T-cell (primary cell): ENCODE measurements at regions of chr19 and their contacts with region 1.

Region 1: GRCh38 chr19:41144403-41144802 is 30.2 kb downstream of the CYP2F1 start:
- DNase-seq: peak; percentile 70 to 95 (median 84)
- ATAC-seq: peak; percentile 80 to 99 (median 94)
- H3K4me3 ChIP-seq: no peak overlapping the region
- H3K4me3 Mint-ChIP-seq: no peak overlapping the region
- H3K27ac ChIP-seq: no peak overlapping the region
- H3K27ac Mint-ChIP-seq: no peak overlapping the region
- H3K4me1 ChIP-seq: no peaks in the 10 kb centered on the region
- H3K4me1 Mint-ChIP-seq: peaks cover 0 to 2% (median 2%) of the 10 kb centered on the region in 3 donors
- H3K27me3 ChIP-seq: peaks cover 0 to 20% of the 10 kb centered on the region in 2 experiments
- H3K27me3 Mint-ChIP-seq: peaks cover 8 to 22% of the 10 kb centered on the region in 2 donors

Region 2: DNA sequence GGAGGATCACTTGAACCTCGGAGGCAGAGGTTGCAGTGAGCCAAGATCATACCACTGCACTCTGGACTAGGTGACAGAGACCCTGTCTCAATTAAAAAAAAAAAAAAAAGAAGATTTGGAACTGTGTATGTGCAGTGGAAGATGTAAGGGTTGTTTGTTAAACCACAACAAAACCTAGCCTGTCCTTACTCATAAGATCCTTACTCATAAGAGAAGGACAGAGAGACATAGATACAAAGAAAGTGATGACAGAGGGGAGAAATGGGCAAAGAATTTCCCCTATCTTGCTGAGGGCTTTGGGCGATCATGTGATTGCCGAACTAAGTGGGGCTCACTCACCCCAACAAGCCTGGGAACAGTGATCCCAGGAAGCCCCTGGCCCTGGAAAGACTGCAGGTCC is 419.5 kb before region 1 on chr19:
- CTCF ChIA-PET with region 1: no interaction called
- POLR2A ChIA-PET with region 1: interaction called in 1 of 2 experiments, 10 read pairs
- DNase-seq: no peak
- ATAC-seq: no peak
- H3K4me3 ChIP-seq: no peak overlapping the region
- H3K4me3 Mint-ChIP-seq: no peak overlapping the region
- H3K27ac ChIP-seq: no peak overlapping the region
- H3K27ac Mint-ChIP-seq: no peak overlapping the region
- H3K4me1 ChIP-seq: peaks cover 0 to 18% of the 10 kb centered on the region in 2 experiments
- H3K4me1 Mint-ChIP-seq: peaks cover 23 to 39% (median 33%) of the 10 kb centered on the region in 3 donors
- H3K27me3 ChIP-seq: no peaks in the 10 kb centered on the region
- H3K27me3 Mint-ChIP-seq: no peaks in the 10 kb centered on the region